AG04450 (cell line): ENCODE measurements at regions of chr20 and their contacts with region 1.

Region 1: GRCh38 chr20:13119583-13119982 is 101.5 kb upstream of the ISM1 start:
- DNase-seq: peak; percentile 7
- H3K4me3 ChIP-seq: no peak overlapping the region
- H3K27ac ChIP-seq: no peak overlapping the region
- H3K27me3 ChIP-seq: peaks cover 3% of the 10 kb centered on the region
- CTCF ChIP-seq: peak; percentile 93

Region 2: DNA sequence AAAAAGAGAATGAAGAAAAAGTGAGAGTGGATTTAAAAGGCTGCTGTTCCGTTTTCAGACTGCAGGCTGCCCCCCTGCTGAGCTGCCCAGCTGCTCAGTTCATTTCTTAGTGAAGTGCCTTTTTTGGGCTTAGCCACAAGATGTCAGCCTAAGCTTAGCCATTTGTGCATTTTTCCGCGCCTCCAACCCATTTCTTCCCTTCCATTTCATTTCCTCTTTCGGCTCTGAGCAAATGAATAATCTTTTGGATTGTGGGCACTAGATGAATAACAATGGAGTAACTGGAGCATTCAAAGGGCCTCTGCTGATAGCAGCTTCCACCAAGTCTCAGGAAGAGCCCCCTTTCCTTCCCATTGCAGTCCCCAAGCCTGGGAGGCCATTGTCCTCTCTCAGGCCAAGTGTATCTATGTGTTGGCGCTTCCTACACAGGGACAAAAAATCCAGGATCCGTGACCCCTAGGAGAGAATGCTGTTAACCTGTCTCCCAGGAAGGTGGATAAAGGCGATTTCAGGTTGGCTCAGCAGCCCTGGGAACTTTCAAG is 194.3 kb before region 1 on chr20:
- CTCF ChIA-PET with region 1: interaction called, 23 read pairs
- POLR2A ChIA-PET with region 1: no interaction called
- DNase-seq: peak; percentile 77
- H3K4me3 ChIP-seq: no peak overlapping the region
- H3K27ac ChIP-seq: no peak overlapping the region
- H3K27me3 ChIP-seq: peaks cover 18% of the 10 kb centered on the region
- CTCF ChIP-seq: peak; percentile 99

Region 3: GRCh38 chr20:13105864-13106457 is 13.6 kb before region 1 on chr20:
- CTCF ChIA-PET with region 1: interaction called, 29 read pairs
- POLR2A ChIA-PET with region 1: no interaction called
- DNase-seq: no peak
- H3K4me3 ChIP-seq: no peak overlapping the region
- H3K27ac ChIP-seq: no peak overlapping the region
- H3K27me3 ChIP-seq: no peaks in the 10 kb centered on the region
- CTCF ChIP-seq: peak; percentile 78

Region 4: DNA sequence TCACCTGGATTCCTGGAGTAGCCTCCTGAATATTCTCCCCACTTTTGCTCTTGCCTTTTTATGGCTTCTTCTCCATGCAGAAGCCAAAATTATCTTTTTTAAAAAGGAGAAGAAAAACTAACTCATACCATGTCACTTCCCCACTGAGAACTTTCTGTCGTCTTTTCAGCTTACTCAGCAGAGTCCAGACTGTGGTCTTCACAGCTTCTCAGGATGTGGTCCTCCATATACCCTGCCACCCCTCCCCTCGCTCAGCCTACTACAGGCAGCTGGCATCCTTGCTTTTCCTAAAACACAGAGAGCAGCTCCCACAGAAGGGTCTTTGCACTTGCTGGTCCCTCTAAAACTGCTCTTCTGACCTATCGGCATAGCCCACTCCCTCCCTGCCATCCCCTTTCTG is 12.1 kb after region 1 on chr20:
- CTCF ChIA-PET with region 1: interaction called, 11 read pairs
- POLR2A ChIA-PET with region 1: no interaction called
- DNase-seq: no peak
- H3K4me3 ChIP-seq: no peak overlapping the region
- H3K27ac ChIP-seq: no peak overlapping the region
- H3K27me3 ChIP-seq: no peaks in the 10 kb centered on the region
- CTCF ChIP-seq: no peak

Region 5: GRCh38 chr20:13755809-13756208 is 636.2 kb after region 1 on chr20:
- CTCF ChIA-PET with region 1: interaction called, 11 read pairs
- POLR2A ChIA-PET with region 1: no interaction called
- DNase-seq: no peak
- H3K4me3 ChIP-seq: no peak overlapping the region
- H3K27ac ChIP-seq: no peak overlapping the region
- H3K27me3 ChIP-seq: no peaks in the 10 kb centered on the region
- CTCF ChIP-seq: no peak

Region 6: GRCh38 chr20:13765299-13765698 is 645.7 kb after region 1 on chr20:
- CTCF ChIA-PET with region 1: interaction called, 11 read pairs
- POLR2A ChIA-PET with region 1: no interaction called
- DNase-seq: no peak
- H3K4me3 ChIP-seq: no peak overlapping the region
- H3K27ac ChIP-seq: no peak overlapping the region
- H3K27me3 ChIP-seq: no peaks in the 10 kb centered on the region
- CTCF ChIP-seq: no peak

Region 7: DNA sequence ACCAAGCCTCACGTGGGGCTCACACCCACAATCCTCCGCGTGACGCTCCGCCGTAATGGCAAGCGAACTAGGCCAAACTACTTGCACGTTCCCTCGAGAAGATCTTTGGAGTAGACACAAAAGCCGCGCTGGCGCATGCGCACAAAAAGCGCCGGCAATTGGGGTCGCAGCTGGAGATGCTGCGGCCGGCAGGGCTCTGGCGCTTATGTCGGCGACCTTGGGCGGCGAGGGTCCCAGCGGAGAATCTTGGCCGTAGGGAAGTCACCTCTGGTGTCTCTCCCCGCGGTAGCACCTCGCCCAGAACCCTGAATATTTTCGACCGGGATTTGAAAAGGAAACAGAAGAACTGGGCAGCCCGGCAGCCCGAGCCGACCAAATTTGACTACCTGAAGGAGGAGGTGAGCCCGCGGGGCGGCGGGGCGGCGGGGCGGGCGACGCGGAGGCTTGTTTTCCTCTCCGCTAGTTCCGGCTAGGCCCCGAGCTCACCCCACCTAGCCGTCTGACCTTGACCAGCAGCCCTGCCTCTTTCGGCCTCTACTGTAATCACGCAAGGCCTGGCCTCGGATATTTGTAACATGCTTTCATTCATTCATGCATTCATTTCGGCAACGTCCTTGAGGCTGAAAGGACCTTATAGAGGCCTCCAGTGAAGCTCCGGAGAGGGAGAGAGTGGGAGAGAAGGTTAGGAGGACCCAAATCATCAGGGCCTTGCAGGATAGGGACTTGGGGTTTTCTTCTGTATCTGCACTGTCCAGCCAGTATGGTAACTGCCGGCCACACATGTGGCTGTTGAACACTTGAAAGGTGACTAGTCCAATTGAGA is 665.5 kb after region 1 on chr20 and contains the starts of genes ESF1 and NDUFAF5:
- CTCF ChIA-PET with region 1: interaction called, 39 read pairs
- POLR2A ChIA-PET with region 1: no interaction called
- DNase-seq: peak; percentile 94
- H3K4me3 ChIP-seq: peak within 1 kb of the TSS; percentile 90
- H3K27ac ChIP-seq: peak within 1 kb of the TSS; percentile 62
- H3K27me3 ChIP-seq: no peaks in the 10 kb centered on the region
- CTCF ChIP-seq: no peak
- polyA plus RNA-seq, gene ESF1: 3.8 and 6.2 TPM in 2 replicates
- polyA plus RNA-seq, gene NDUFAF5: 18.4 and 24.1 TPM in 2 replicates